ENCODE measurements at regions of chr6 and their contacts with region 1.

Region 1: DNA sequence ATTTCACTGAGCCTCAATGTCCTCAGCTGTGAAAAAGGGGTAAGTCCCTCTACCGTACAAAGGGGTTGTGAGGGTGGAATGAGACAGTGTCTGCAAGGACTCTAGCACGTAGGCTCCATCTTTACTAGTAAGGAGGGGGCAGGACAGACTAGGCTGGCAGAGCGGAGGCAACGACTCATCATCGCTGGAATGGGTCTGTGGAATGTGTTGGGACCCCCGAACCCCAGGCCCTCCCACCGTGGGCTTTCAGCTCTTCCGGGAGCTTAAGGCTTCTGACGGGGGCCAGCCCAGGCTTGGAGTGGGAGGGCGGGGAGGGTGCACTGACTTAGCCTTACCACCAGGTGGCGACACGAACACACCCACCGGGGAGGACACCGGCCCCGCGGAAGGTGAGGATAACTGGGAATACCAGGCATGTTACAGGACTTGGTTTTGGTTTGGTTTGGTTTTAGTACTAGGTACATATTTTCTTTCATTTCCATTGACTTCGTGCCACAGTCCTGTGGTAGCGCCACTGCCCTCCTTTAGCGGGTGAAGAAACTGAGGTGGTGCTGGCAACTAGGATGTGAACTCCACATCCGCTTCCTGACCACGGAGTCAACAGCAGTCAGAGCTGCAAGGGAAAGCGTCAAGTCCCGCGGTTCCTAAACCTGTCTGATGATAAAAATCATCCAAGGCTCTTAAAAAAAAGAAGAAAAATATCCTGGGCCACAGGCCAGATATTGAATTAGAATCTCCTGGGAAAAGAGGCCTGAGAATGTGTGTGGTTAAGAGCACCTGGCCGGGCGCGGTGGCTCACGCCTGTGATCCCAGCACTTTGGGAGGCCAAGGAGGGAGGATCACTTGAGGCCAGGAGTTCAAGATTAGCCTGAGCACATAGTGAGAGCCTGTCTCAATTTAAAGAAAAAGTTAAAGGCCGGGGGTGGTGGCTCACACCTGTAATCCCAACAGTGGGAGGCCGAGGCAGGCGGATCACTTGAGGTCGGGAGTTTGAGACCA is 10.3 kb upstream of the TULP1 start:
- DNase-seq: peak; percentile 48
- H3K4me3 Mint-ChIP-seq: peak overlapping the region; percentile 69
- H3K27ac Mint-ChIP-seq: peak overlapping the region; percentile 52
- H3K4me1 Mint-ChIP-seq: peaks cover 19% of the 10 kb centered on the region
- H3K27me3 Mint-ChIP-seq: peaks cover 12% of the 10 kb centered on the region

Region 2: DNA sequence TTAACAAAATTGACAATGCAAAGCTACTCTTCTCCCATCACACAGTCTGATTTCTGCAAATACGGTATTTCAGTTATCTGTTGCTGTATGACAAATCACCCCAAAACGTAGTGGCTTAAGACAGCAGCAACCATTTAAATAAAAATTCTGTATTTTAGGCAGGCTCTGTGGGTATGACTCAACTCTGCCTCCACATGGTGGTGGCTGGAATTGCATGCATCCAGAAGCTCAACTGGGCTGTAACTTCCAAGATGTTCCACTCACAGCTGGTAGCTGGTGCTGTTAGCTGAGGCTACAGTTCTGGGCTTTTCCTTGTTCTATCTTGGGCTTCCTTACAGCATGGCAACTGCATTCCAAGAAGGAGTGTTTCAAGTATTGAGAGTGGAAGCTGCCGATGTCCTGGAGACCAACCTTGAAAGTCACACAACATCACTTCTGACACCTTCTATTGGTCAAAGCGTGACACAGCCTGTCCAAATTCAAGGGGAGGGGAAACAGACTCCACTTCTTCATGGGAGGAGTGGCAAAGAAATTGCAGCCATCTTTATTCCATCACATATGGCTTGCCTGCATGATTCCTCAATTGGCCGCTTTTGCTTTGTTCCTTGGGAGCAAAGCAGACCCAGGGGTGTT is 29.4 kb after region 1 on chr6:
- intact Hi-C with region 1: loop called (anchors 1 kb)
- DNase-seq: peak; percentile 40
- H3K4me3 Mint-ChIP-seq: no peak overlapping the region
- H3K27ac Mint-ChIP-seq: no peak overlapping the region
- H3K4me1 Mint-ChIP-seq: no peaks in the 10 kb centered on the region
- H3K27me3 Mint-ChIP-seq: peaks cover 14% of the 10 kb centered on the region

Region 3: DNA sequence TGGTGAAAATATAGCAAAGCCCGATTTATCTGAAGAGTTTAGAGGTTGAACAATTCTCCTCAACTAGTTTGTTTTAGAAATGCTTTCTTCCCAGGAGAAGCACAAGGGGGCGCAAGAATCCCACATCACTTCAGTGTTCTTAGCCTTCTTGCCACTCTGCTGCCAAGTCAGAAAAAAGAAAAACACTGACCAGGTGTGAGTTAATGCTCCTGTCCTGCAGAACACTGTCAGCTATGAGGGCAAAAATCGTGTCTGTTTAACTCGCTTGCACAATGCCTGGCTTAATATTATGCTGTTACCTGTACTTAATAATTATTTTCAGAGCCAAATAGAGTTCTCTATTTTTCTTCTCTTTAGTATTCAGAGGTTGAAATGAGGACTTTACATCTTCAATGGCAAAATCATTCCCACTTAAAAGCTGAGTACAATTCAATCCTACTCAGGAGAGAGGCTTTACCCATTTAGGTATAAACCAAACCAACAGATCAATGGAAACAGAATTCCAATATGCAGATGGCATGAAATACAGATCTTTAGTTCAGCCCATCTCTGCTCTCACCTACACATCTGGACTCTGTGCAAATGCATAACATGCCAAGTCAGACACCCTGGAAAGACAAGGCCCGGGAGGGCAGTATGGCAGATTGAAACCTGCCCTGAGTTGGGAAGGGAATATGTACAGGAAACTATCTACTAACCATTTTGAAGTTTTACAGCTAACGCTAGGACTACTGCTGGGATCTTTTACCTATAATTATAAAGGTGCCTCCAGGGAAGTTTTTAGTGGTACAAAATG is 61.1 kb after region 1 on chr6:
- intact Hi-C with region 1: loop called (anchors 2 kb)
- DNase-seq: peak; percentile 54
- H3K4me3 Mint-ChIP-seq: no peak overlapping the region
- H3K27ac Mint-ChIP-seq: no peak overlapping the region
- H3K4me1 Mint-ChIP-seq: peaks cover 44% of the 10 kb centered on the region
- H3K27me3 Mint-ChIP-seq: no peaks in the 10 kb centered on the region

Region 4: DNA sequence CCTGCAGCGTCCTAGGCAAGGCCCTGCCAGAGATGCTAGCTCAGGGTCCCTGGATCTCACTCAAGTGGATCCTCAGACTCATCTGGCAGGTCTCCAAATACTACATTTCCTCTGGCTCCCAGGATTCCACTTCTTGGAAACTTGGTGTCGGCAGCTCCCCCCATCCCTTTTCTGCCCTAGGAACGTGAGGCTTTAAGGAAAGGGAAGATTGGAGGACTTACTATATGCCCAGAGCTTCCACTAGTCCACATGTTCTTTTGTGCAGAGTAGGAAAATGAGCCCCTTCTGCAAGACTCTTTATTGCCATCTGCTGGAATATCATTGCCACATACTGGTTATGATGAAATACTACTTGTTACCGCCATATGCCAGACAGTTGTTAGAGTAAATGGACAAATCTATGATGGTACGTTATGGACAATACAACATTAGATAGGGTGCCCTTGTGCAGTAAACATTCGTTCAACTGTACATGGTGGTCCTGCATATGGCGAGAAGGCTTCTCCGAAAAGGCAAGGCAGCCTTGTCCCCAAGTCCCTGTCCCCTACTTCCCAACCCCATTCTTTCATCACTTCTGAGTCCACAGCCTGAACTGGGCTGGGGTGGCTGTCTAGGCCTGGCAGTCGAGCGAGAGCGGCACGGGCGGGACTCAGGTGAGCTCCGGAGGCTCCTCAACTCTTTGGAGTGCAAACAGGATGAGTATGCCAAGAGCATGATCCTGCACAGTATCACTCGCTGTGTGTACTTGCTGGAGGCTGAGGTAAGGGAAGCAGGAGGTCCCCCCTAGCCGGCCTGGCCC is 214.7 kb after region 1 on chr6:
- intact Hi-C with region 1: loop called (anchors 1 kb)
- DNase-seq: no peak
- H3K4me3 Mint-ChIP-seq: no peak overlapping the region
- H3K27ac Mint-ChIP-seq: peak overlapping the region; percentile 66
- H3K4me1 Mint-ChIP-seq: peaks cover 32% of the 10 kb centered on the region
- H3K27me3 Mint-ChIP-seq: no peaks in the 10 kb centered on the region

Region 5: GRCh38 chr6:35757456-35758123 is 234.6 kb after region 1 on chr6:
- intact Hi-C with region 1: loop called (anchors 5 kb)
- DNase-seq: no peak
- H3K4me3 Mint-ChIP-seq: no peak overlapping the region
- H3K27ac Mint-ChIP-seq: no peak overlapping the region
- H3K4me1 Mint-ChIP-seq: peaks cover 4% of the 10 kb centered on the region
- H3K27me3 Mint-ChIP-seq: peaks cover 18% of the 10 kb centered on the region

Region 6: GRCh38 chr6:36360241-36361054 is 837.5 kb after region 1 on chr6:
- intact Hi-C with region 1: loop called (anchors 2 kb)
- DNase-seq: peak; percentile 56
- H3K4me3 Mint-ChIP-seq: no peak overlapping the region
- H3K27ac Mint-ChIP-seq: no peak overlapping the region
- H3K4me1 Mint-ChIP-seq: peaks cover 45% of the 10 kb centered on the region
- H3K27me3 Mint-ChIP-seq: peaks cover 16% of the 10 kb centered on the region